PC-9 (cell line): ENCODE measurements at regions of chr1 and their contacts with region 1.

Region 1: GRCh38 chr1:160777486-160778089 is 18.4 kb upstream of the LY9 start:
- DNase-seq: no peak
- H3K4me3 ChIP-seq: no peak overlapping the region
- H3K27ac ChIP-seq: no peak overlapping the region
- H3K4me1 ChIP-seq: peaks cover 39% of the 10 kb centered on the region
- H3K27me3 ChIP-seq: no peaks in the 10 kb centered on the region
- CTCF ChIP-seq: peak; percentile 51

Region 2: GRCh38 chr1:160726498-160727315 is 50.9 kb before region 1 on chr1:
- CTCF ChIA-PET with region 1: interaction called, 3 read pairs
- POLR2A ChIA-PET with region 1: interaction called, 6 read pairs
- intact Hi-C with region 1: loop called (anchors 5 kb)
- DNase-seq: peak; percentile 51 to 63
- H3K4me3 ChIP-seq: no peak overlapping the region
- H3K27ac ChIP-seq: peak overlapping the region; percentile 50
- H3K4me1 ChIP-seq: peaks cover 18% of the 10 kb centered on the region
- H3K27me3 ChIP-seq: no peaks in the 10 kb centered on the region
- CTCF ChIP-seq: peak; percentile 93

Region 3: DNA sequence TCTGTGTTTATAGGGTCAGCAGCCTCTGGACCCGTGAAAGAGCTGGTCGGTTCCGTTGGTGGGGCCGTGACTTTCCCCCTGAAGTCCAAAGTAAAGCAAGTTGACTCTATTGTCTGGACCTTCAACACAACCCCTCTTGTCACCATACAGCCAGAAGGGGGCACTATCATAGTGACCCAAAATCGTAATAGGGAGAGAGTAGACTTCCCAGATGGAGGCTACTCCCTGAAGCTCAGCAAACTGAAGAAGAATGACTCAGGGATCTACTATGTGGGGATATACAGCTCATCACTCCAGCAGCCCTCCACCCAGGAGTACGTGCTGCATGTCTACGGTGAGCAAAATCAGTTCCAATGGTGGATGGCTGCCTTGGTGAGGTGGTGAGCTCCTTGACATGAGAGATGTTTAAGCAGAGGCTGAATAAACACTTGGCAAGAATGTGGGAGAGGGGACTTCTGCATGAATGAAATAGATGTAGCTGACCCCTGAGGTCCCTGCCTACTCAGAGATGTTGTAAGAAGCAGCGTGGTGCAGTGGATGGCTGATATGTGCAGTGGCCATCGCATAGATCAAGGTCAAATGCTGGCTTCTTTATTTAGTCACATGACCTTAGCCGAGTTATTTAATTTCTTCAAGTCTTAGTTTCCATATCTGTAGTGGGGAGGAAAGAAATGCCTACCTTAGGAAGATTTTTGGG is 29.3 kb before region 1 on chr1:
- CTCF ChIA-PET with region 1: interaction called, 4 read pairs
- POLR2A ChIA-PET with region 1: interaction called, 3 read pairs
- intact Hi-C with region 1: loop called (anchors 2 kb)
- DNase-seq: peak; percentile 19 to 43
- H3K4me3 ChIP-seq: no peak overlapping the region
- H3K27ac ChIP-seq: no peak overlapping the region
- H3K4me1 ChIP-seq: peaks cover 22% of the 10 kb centered on the region
- H3K27me3 ChIP-seq: peaks cover 26% of the 10 kb centered on the region
- CTCF ChIP-seq: peak; percentile 40; the same call in 1 of the 2 replicates

Region 4: DNA sequence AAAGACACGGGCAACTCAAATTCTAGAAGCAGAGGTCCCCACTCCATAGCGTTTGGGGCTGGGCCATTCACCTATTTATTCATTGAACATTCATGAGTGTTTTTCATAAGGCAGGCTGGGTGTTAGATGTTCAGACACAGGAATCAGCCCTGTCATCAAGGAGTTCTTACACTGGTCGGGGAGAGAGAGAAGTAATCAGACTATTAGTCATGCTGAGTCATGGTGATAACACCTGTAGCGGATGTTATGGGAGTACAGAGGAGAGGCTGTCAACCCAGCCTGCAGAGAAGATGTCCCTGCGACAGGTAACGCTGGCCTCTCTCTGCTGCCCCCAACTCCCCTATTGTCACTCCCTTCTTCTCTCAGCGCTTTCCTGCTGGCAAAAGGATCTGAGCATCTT is 35.6 kb after region 1 on chr1:
- CTCF ChIA-PET with region 1: no interaction called
- POLR2A ChIA-PET with region 1: no interaction called
- intact Hi-C with region 1: loop called (anchors 1 kb)
- DNase-seq: peak; percentile 50 to 89
- H3K4me3 ChIP-seq: no peak overlapping the region
- H3K27ac ChIP-seq: peak overlapping the region; percentile 65
- H3K4me1 ChIP-seq: peaks cover 24% of the 10 kb centered on the region
- H3K27me3 ChIP-seq: no peaks in the 10 kb centered on the region
- CTCF ChIP-seq: no peak

Region 5: DNA sequence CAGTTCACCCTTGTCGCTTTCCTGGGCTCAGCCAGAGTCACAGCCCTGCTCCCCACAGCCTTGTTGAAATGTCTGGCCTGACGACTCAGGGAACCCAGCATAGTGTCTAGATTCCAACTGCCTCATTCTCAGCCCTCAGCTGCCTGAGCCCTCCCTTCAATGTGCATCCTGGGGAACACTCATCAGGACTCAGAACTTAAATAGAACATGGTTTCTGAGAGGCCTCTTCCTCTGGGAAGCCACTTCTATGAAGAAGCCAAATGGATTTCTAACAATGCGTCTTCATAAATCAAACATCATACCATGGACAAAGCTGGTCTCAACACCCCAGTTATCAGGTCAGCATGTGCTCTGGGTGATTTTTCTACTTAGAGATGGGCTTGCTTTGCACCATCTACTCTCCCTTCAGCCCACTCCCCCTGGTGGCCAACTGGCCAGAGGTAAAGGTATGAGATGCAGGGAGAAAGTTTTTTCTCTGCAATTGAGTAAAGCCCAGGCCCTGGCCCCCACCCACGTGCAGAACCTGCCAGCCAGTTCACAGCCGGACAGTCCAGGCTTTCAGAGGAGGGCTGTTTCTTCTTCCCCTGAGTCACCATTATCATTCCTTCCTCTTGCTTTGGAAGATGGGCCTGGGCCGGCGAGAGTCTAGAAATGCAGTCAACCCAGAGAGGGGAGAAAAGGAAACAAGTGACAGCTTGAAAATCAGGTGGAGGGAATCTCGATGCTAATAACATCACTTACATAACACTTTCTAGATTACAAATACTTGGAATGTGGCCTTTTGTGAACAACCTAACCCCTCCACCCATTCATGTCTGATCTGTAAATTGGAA is 52.9 kb after region 1 on chr1:
- CTCF ChIA-PET with region 1: interaction called, 6 read pairs
- POLR2A ChIA-PET with region 1: interaction called, 3 read pairs
- intact Hi-C with region 1: loop called (anchors 1 kb)
- DNase-seq: peak; percentile 48 to 64
- H3K4me3 ChIP-seq: no peak overlapping the region
- H3K27ac ChIP-seq: no peak overlapping the region
- H3K4me1 ChIP-seq: peaks cover 28% of the 10 kb centered on the region
- H3K27me3 ChIP-seq: no peaks in the 10 kb centered on the region
- CTCF ChIP-seq: peak; percentile 87

Region 6: DNA sequence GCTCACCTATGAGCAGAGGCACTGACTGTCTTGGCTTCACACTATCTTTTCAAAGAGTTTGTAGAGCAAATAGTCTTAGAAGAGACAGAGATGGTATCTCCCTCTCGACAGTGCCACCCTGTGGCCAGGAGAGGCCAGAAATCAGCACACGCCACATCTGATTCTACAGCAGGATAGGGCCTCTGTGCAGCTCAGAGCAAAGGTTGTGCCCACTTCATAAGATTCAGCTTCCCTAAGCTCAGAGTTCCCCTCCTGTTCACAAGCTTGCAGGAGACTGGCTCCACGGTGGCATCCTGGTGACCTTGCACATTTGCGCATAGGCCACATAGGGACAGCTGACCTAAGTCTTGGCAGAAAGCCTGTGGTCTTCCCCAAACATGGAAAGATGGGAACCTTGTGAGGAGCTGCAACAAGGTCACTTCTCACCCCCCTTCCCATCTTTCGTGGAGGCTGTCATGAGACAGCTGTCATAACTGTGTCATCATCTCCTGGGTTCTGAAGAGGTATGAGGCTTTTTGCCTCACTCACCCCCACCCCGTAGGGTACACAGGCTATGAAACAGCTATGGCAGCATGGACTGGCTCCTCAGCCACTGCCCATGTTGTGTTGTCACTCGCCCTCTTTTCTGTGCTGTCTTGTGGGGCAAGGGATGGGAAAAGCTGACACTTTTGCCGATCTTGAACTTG is 174.0 kb after region 1 on chr1:
- CTCF ChIA-PET with region 1: interaction called, 4 read pairs
- POLR2A ChIA-PET with region 1: no interaction called
- intact Hi-C with region 1: loop called (anchors 5 kb)
- DNase-seq: peak; percentile 40 to 62
- H3K4me3 ChIP-seq: no peak overlapping the region
- H3K27ac ChIP-seq: no peak overlapping the region
- H3K4me1 ChIP-seq: no peaks in the 10 kb centered on the region
- H3K27me3 ChIP-seq: no peaks in the 10 kb centered on the region
- CTCF ChIP-seq: peak; percentile 83